Activated CD8-positive, alpha-beta T cell treated with anti-CD3 and anti-CD28 coated beads for 36 hours (primary cell): ENCODE measurements at regions of chr19 and their contacts with region 1.

Region 1: GRCh38 chr19:13060964-13061927 is 41.4 kb downstream of the LYL1 start:
- DNase-seq: peak; percentile 88
- ATAC-seq: peak; percentile 99
- H3K4me3 Mint-ChIP-seq: peak overlapping the region; percentile 65
- H3K27ac Mint-ChIP-seq: no peak overlapping the region
- H3K4me1 Mint-ChIP-seq: peaks cover 6% of the 10 kb centered on the region
- H3K27me3 Mint-ChIP-seq: peaks cover 14% of the 10 kb centered on the region
- CTCF ChIP-seq: peak; percentile 98

Region 2: GRCh38 chr19:12974301-12975220 is 86.7 kb before region 1 on chr19:
- CTCF ChIA-PET with region 1: interaction called, 160 read pairs
- POLR2A ChIA-PET with region 1: no interaction called
- intact Hi-C with region 1: loop called (anchors 5 kb)
- DNase-seq: no peak
- ATAC-seq: no peak
- H3K4me3 Mint-ChIP-seq: no peak overlapping the region
- H3K27ac Mint-ChIP-seq: no peak overlapping the region
- H3K4me1 Mint-ChIP-seq: peaks cover 4% of the 10 kb centered on the region
- H3K27me3 Mint-ChIP-seq: peaks cover 10% of the 10 kb centered on the region
- CTCF ChIP-seq: no peak

Region 3: GRCh38 chr19:13002166-13002898 is 58.9 kb before region 1 on chr19:
- CTCF ChIA-PET with region 1: interaction called, 21 read pairs
- POLR2A ChIA-PET with region 1: no interaction called
- intact Hi-C with region 1: no loop called
- DNase-seq: no peak
- ATAC-seq: no peak
- H3K4me3 Mint-ChIP-seq: no peak overlapping the region
- H3K27ac Mint-ChIP-seq: no peak overlapping the region
- H3K4me1 Mint-ChIP-seq: no peaks in the 10 kb centered on the region
- H3K27me3 Mint-ChIP-seq: no peaks in the 10 kb centered on the region
- CTCF ChIP-seq: no peak

Region 4: GRCh38 chr19:13022859-13023636 is 38.2 kb before region 1 on chr19:
- CTCF ChIA-PET with region 1: interaction called, 55 read pairs
- POLR2A ChIA-PET with region 1: no interaction called
- intact Hi-C with region 1: no loop called
- DNase-seq: peak; percentile 29
- ATAC-seq: peak; percentile 63
- H3K4me3 Mint-ChIP-seq: peak overlapping the region; percentile 64
- H3K27ac Mint-ChIP-seq: peak overlapping the region; percentile 12
- H3K4me1 Mint-ChIP-seq: peaks cover 18% of the 10 kb centered on the region
- H3K27me3 Mint-ChIP-seq: peaks cover 21% of the 10 kb centered on the region
- CTCF ChIP-seq: no peak

Region 5: DNA sequence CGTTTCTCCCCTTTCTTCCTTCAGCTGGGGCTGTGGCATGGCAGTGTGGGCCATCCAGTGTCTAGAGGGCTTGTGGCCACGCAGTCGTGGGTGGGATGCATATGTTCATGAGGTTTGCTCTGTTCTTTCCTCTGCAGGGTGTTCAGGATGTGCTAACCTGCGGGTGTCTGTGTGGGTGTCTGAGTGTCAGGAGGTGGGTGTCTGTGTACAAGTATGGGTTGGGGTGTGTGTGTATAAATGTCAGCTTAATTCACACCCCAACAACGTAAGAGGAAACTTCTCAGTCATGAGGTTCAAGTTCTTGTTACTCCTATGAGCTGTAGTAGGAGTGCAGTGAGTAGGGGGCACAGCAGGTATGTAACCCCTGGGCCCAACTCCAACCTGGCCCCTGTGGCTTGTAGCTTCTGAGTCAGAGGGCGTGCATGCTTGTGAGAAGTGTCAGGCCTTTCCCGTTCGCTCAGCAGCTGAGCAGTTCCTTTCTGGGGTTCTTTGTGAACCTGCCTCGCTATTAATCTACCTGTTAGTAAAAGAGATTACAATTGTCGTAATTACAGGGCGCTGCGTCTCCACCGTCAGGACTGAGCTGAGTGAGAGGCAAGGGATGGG is 16.9 kb before region 1 on chr19:
- CTCF ChIA-PET with region 1: interaction called, 99 read pairs
- POLR2A ChIA-PET with region 1: no interaction called
- intact Hi-C with region 1: no loop called
- DNase-seq: peak; percentile 78
- ATAC-seq: peak; percentile 90
- H3K4me3 Mint-ChIP-seq: no peak overlapping the region
- H3K27ac Mint-ChIP-seq: peak overlapping the region; percentile 35
- H3K4me1 Mint-ChIP-seq: peaks cover 30% of the 10 kb centered on the region
- H3K27me3 Mint-ChIP-seq: no peaks in the 10 kb centered on the region
- CTCF ChIP-seq: no peak

Region 6: DNA sequence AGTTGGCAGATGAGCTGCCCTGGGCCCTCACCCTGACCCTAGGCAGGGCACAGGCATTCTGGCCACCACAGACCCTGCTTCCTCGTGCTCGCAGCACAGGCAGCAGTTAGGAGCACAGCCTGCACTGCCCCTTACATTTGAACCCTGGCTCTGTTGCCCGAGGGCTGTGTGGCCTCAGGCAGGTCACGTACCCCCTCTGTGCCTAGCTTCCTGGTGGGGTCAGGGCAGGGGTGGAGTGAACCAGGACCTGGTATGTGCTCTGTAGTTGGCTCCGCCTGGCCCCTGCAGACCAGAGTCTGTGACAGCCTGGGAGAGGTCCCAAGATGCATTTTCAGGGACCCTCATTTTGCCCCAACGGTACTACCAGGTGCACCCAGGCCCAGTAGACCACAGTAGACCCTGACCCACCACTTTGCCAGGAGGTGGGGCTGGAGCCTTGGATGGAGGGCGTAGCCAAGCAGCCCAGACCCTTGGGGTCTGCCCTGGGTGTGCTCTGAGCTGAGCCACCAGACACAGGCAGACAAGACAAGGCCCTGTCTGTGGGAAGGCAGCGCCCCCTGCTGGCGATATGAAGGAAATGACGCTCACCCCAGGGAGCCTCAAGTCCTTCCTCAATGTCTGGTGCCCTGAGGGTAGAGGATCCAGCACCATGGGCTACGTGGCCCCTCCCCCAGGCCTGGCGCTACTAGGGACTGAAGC is 32.3 kb after region 1 on chr19:
- CTCF ChIA-PET with region 1: interaction called, 116 read pairs
- POLR2A ChIA-PET with region 1: no interaction called
- intact Hi-C with region 1: no loop called
- DNase-seq: peak; percentile 91
- ATAC-seq: peak; percentile 84
- H3K4me3 Mint-ChIP-seq: no peak overlapping the region
- H3K27ac Mint-ChIP-seq: no peak overlapping the region
- H3K4me1 Mint-ChIP-seq: peaks cover 24% of the 10 kb centered on the region
- H3K27me3 Mint-ChIP-seq: peaks cover 26% of the 10 kb centered on the region
- CTCF ChIP-seq: peak; percentile 93

Region 7: DNA sequence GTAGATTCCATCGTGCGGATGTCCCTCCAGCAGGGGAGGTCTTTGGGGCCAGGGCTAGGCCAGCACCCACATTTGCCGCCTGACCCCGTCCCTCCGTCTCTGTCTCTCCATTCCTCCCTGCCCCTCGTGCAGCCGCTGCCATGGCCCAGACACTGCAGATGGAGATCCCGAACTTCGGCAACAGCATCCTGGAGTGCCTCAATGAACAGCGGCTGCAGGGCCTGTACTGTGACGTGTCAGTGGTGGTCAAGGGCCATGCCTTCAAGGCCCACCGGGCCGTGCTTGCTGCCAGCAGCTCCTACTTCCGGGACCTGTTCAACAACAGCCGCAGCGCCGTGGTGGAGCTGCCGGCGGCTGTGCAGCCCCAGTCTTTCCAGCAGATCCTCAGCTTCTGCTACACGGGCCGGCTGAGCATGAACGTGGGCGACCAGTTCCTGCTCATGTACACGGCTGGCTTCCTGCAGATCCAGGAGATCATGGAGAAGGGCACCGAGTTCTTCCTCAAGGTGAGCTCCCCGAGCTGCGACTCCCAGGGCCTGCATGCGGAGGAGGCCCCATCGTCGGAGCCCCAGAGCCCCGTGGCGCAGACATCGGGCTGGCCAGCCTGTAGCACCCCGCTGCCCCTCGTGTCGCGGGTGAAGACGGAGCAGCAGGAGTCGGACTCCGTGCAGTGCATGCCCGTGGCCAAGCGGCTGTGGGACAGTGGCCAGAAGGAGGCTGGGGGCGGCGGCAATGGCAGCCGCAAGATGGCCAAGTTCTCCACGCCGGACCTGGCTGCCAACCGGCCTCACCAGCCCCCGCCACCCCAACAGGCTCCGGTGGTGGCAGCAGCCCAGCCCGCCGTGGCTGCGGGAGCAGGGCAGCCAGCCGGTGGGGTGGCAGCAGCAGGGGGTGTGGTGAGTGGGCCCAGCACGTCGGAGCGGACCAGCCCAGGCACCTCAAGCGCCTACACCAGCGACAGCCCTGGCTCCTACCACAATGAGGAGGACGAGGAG is 74.1 kb after region 1 on chr19:
- CTCF ChIA-PET with region 1: no interaction called
- POLR2A ChIA-PET with region 1: no interaction called
- intact Hi-C with region 1: no loop called
- DNase-seq: no peak
- ATAC-seq: no peak
- H3K4me3 Mint-ChIP-seq: no peak overlapping the region
- H3K27ac Mint-ChIP-seq: no peak overlapping the region
- H3K4me1 Mint-ChIP-seq: peaks cover 34% of the 10 kb centered on the region
- H3K27me3 Mint-ChIP-seq: no peaks in the 10 kb centered on the region
- CTCF ChIP-seq: no peak

Region 8: GRCh38 chr19:13277104-13277809 is 216.0 kb after region 1 on chr19:
- CTCF ChIA-PET with region 1: no interaction called
- POLR2A ChIA-PET with region 1: no interaction called
- intact Hi-C with region 1: no loop called
- DNase-seq: peak; percentile 78
- ATAC-seq: peak; percentile 94
- H3K4me3 Mint-ChIP-seq: peak overlapping the region; percentile 26
- H3K27ac Mint-ChIP-seq: peak overlapping the region; percentile 80
- H3K4me1 Mint-ChIP-seq: peaks cover 10% of the 10 kb centered on the region
- H3K27me3 Mint-ChIP-seq: peaks cover 4% of the 10 kb centered on the region
- CTCF ChIP-seq: peak; percentile 66